CD4-positive, alpha-beta memory T cell (primary cell): ENCODE measurements at regions of chr12 and their contacts with region 1.

Region 1: GRCh38 chr12:57693659-57694458 is at the start of gene OS9:
- DNase-seq: peak; percentile 93 to 100 (median 99)
- H3K4me3 ChIP-seq: peak within 1 kb of the TSS; percentile 75 to 82
- H3K4me3 Mint-ChIP-seq: no peak within 1 kb of the TSS
- H3K27ac ChIP-seq: peak within 1 kb of the TSS; percentile 79
- H3K27ac Mint-ChIP-seq: no peak within 1 kb of the TSS
- H3K4me1 ChIP-seq: peaks cover 26% of the 10 kb centered on the region
- H3K4me1 Mint-ChIP-seq: peaks cover 0 to 18% (median 5%) of the 10 kb centered on the region in 4 donors
- H3K27me3 ChIP-seq: no peaks in the 10 kb centered on the region
- H3K27me3 Mint-ChIP-seq: peaks cover 4 to 6% of the 10 kb centered on the region in 2 donors
- total RNA-seq, gene OS9: 189 to 195 TPM

Region 2: DNA sequence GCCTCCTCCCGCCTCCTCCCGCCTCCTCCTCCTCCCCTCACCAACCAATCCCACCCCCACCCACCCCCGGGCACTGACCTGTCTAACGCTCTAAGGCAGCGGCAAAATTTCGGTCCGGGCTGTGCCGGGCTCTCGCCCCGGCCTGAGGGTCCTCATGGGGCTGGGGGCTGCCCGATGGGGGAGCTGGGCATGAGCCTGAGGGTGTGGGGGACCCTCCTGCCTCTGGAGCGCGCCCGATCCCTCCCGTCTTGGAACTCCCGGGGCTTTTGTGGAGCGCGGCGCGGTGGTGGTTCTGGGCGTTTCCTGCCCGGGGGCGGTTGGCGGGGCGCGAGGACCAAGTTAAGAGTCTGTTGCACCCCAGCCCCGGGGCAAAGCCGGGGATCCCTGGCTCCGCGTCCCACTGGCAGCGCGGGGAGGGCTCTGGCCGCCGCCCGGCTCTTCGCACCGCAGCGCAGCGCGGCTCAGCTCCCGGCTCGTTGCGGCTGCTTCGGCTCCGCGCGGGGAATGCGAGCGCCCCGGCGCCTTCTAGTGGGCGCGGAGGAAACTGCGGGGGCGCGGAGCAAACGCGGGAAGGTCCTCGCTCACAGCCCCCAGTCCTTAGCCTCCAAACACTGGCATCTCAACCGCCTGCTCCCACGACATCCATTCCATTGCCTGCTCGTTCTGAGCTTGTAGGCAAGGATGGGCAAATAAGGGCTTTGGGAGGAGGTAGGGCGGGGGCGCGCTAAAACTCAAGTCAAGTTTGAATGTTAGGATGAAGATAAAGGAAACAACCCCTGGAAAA is 61.0 kb before region 1 on chr12 and contains the start of gene B4GALNT1:
- CTCF ChIA-PET with region 1: interaction called, 5 read pairs
- POLR2A ChIA-PET with region 1: no interaction called
- intact Hi-C with region 1: loop called (anchors 1 kb)
- DNase-seq: peak in 4 of 5 donors; percentile 57 to 70 (median 61)
- H3K4me3 ChIP-seq: peak within 1 kb of the TSS in 1 of 2 donors; percentile 45
- H3K4me3 Mint-ChIP-seq: peak within 1 kb of the TSS; percentile 31 to 85 (median 74)
- H3K27ac ChIP-seq: no peak within 1 kb of the TSS
- H3K27ac Mint-ChIP-seq: peak within 1 kb of the TSS in 1 of 7 donors; percentile 17
- H3K4me1 ChIP-seq: peaks cover 13% of the 10 kb centered on the region
- H3K4me1 Mint-ChIP-seq: peaks cover 7 to 13% (median 9%) of the 10 kb centered on the region in 4 donors
- H3K27me3 ChIP-seq: peaks cover 25% of the 10 kb centered on the region
- H3K27me3 Mint-ChIP-seq: peaks cover 34 to 47% of the 10 kb centered on the region in 2 donors
- total RNA-seq, gene B4GALNT1: not detected

Region 3: DNA sequence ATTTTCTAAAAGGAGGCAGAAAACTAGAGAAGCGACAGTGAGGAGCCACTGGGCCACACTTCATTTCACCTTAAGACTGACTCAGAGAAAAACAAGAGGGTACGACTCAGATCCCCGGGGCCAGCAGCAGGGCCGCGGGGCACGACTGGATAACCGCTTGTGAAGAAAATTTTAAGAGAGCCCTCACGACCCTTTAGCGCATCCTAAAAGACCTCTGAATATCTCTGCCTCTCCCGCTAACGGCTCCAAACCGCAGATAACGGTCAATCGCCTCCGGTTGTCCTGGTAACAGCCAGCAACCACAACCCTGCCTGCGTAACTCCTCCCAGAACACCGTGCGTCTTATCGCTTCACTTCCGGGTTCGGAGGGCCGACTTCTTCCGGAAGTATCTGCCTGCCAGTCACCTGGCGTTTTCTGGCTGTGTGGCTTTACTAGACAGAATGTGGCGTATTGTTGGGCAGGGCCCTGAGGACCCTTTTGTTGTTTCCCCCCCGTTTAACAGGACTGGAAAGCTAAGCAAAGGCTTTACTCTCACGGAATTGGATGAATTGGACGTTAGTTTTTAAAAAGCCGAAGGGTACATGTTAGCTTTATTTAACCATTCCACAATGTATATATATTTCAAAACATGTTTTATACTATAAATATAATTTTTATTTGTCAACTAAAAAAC is 242.1 kb after region 1 on chr12:
- CTCF ChIA-PET with region 1: no interaction called
- POLR2A ChIA-PET with region 1: interaction called, 3 read pairs
- intact Hi-C with region 1: loop called (anchors 5 kb)
- DNase-seq: peak; percentile 92 to 97 (median 95)
- H3K4me3 ChIP-seq: peak overlapping the region; percentile 77 to 84
- H3K4me3 Mint-ChIP-seq: peak overlapping the region; percentile 89 to 98 (median 94)
- H3K27ac ChIP-seq: peak overlapping the region; percentile 94
- H3K27ac Mint-ChIP-seq: peak overlapping the region; percentile 98 to 100 (median 100)
- H3K4me1 ChIP-seq: peaks cover 24% of the 10 kb centered on the region
- H3K4me1 Mint-ChIP-seq: peaks cover 18 to 34% (median 22%) of the 10 kb centered on the region in 4 donors
- H3K27me3 ChIP-seq: no peaks in the 10 kb centered on the region
- H3K27me3 Mint-ChIP-seq: no peaks in the 10 kb centered on the region